PC-9 (cell line): ENCODE measurements at regions of chr9 and their contacts with region 1.

Region 1: DNA sequence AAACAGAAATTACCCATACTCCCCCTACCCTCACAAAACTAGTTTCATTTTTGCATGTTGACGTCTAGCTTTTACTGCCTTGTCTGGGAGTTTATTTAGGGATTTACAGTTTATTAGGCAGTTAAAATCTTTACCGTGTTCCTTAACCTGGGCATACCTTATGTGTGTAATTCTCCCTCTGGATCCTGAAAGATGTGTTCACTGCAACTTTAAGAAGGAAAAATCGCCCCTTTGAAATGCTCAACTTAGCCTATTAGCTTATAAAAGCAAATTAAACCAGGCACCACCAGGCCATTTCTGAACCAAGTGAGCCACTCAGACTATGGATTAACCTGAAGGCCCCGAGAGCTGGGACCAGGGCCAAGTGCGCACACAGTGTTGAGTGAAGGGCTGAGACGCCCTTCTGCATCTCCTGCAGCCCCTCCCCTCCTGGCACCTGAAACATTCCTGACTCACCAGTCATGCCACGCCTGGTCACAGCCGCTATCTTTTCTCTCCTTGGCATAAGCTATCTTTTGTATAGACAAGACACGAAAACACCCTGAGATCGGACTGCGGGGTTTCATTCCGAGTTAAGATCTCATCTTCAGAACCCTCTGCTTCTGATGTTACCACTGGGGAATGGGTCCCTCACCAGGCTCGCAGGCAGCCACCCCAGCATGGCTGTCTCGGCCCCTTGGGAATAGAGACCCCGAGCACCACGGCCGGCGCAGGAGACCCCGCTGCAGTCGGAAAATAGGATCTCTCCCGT is 111.9 kb downstream of the ROR2 start:
- DNase-seq: peak; percentile 41 to 48
- H3K4me3 ChIP-seq: no peak overlapping the region; the same call in 1 of the 2 replicates
- H3K27ac ChIP-seq: no peak overlapping the region
- H3K4me1 ChIP-seq: peaks cover 11% of the 10 kb centered on the region
- H3K27me3 ChIP-seq: peaks cover 67% of the 10 kb centered on the region
- CTCF ChIP-seq: no peak

Region 2: DNA sequence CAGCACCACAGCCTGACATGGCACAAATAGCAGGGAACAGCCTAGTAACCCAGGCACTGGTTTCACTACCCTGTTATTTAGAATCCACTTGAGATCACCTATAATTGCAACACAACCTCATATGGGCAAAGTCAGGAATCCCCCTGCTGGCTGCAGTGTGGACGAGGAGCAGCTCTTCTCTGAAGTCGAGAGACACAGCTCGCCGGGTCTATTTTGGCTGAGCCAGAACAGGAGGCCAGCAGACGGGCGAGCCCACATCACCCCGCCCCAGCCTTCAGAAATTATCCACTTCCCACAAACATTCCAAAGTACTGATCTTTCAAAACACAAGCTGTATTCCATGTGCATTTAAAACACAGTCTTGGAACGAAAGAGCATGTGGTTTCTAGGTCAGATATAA is 67.1 kb before region 1 on chr9:
- CTCF ChIA-PET with region 1: no interaction called
- POLR2A ChIA-PET with region 1: no interaction called
- intact Hi-C with region 1: no loop called
- DNase-seq: no peak
- H3K4me3 ChIP-seq: no peak overlapping the region
- H3K27ac ChIP-seq: no peak overlapping the region
- H3K4me1 ChIP-seq: no peaks in the 10 kb centered on the region
- H3K27me3 ChIP-seq: peaks cover 99% of the 10 kb centered on the region
- CTCF ChIP-seq: no peak

Region 3: GRCh38 chr9:91811024-91811909 is 26.9 kb before region 1 on chr9:
- CTCF ChIA-PET with region 1: interaction called, 11 read pairs
- POLR2A ChIA-PET with region 1: no interaction called
- intact Hi-C with region 1: no loop called
- DNase-seq: no peak
- H3K4me3 ChIP-seq: no peak overlapping the region
- H3K27ac ChIP-seq: no peak overlapping the region
- H3K4me1 ChIP-seq: no peaks in the 10 kb centered on the region
- H3K27me3 ChIP-seq: peaks cover 33% of the 10 kb centered on the region
- CTCF ChIP-seq: no peak